Panc1 (cell line): ENCODE measurements at regions of chr1 and their contacts with region 1.

Region 1: DNA sequence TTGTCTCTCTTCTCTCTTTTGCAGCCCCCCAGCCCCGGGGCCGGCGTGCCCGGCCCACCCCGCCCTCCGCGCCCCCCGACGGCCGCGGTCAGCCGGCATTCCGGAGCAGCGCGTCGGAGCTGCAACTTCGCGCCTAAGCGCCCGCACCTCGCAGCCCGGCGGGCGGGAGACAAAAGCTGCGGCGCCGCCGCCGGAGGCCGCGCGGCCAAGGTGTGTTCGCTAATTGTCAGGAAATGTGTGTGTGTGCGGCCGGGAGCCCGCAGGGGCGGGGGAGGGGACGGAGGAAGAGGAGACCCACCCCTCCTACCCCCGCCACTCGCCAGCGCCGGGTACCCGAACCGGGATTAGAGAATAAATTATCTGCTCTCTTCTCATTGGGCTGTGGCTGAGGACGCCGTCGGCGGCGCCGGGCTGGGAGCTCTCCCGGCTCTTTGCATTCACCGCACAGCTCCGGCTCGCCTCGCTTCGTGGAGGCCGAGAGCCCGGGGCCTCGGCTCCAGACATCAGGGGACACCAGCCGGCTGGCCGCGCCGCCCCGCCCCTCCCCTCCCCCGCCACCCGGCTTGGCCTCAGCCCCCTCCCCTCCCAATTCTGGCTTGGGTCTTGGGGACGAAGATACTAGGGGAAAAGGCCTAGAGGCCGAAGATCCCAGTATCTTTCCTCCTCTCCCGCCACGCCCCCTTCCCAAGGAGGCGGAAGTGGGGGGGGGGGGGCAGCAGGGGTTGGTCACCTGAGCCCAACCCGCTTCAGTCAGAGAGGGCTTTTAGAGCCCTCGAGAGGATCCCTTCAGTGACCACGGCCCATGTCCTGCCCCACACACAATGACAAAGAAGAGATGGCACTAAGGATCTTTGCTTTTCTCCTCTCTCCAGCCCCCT is 1.3 kb upstream of the BLACAT1 start:
- DNase-seq: no peak
- ATAC-seq: peak; percentile 75
- H3K4me3 ChIP-seq: peak overlapping the region; percentile 32 to 44
- H3K27ac ChIP-seq: no peak overlapping the region
- H3K4me1 ChIP-seq: no peaks in the 10 kb centered on the region; the same call in 1 of the 2 replicates
- H3K27me3 ChIP-seq: peaks cover 31% of the 10 kb centered on the region
- CTCF ChIP-seq: no peak

Region 2: DNA sequence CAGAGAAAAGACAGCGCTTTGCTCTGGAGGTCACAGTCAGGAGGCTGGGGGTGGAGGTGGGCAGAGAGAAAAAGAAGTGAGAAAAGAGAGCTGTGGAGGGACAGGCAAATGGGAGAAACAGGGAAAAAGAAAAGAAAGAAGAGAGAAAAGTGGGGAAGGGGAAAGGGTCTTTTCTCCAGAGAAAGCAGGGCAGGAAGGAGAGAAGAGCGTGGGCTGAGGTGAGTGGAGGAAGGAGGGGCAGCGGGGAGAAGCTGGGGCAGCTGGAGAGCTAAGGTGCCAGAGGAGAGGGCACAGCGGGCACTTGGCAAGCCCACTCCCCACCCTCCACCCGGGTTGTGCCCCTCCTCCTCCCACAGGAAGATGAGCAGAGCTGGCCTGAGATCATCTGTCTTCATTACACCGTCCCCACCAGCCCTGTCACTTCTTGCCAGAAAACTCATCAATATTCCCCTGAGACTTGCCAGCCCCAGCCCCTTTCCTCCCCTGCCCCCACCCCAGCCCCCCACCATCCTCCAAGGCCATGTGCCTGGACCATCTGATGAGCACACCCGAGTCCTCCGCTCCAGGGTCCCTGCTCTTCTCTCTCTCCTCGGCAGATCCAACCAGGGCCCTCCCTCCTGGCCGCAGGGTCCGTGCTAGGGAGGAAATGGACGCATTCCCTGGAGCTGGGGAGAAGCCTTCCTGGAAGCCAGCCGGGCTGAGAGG is 15.8 kb after region 1 on chr1:
- CTCF ChIA-PET with region 1: interaction called, 11 read pairs
- POLR2A ChIA-PET with region 1: interaction called, 5 read pairs
- in situ Hi-C with region 1: no loop called
- intact Hi-C with region 1: no loop called
- DNase-seq: no peak
- ATAC-seq: peak; percentile 15; the same call in 1 of the 2 replicates
- H3K4me3 ChIP-seq: no peak overlapping the region
- H3K27ac ChIP-seq: no peak overlapping the region
- H3K4me1 ChIP-seq: peaks cover 14% of the 10 kb centered on the region
- H3K27me3 ChIP-seq: 0 out of 2 replicates have a peak, but pooled peaks cover 2% of the 10 kb centered on the region
- CTCF ChIP-seq: no peak